GM12878 (cell line): ENCODE measurements at regions of chr3 and their contacts with region 1.

Region 1: DNA sequence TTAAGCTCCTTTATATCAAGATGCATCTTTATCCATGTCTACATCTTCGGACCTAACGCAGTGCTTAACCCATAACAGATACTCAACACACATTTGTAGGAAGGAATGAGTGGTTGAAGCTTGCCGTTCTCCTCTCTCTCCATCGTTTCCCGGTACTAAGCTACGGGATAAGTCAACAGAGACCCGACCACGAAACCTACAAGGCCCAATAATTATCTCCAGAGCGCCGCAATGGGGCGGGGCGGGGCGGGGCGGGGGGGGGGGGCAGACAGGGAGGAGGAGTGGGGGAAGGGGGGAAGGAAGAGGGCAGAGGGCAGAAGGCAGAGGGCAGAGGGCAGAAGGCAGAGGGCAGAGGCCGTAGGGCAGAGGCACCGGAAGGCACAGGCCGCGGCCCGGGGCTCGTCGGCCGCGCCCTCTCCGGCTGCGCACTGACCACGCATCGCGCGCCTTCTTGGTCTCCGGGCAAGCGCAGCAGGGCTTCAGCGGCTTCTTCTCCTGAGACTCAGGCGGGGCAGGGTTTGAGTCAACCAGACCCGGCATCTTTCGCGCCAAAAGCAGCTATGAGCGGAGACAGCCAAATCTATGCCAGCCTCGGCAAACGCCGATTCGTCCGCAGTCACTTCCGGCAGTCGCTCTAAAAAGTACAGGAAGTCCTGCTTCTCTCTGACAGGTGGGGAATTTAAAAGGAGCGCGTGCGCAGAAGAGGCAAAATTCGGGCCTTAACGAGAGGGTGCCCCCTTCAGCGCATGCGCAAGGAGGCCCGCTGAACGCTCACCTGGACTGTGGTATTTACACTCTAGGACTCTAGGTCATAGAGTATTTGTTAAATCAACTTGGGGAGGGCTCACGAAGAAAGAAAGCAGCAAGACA is at the start of gene COX17:
- DNase-seq: peak; percentile 99
- ATAC-seq: peak; percentile 88
- H3K4me3 ChIP-seq: peak within 1 kb of the TSS; percentile 90
- H3K27ac ChIP-seq: peak within 1 kb of the TSS; percentile 95
- H3K4me1 ChIP-seq: peaks cover 6% of the 10 kb centered on the region
- H3K27me3 ChIP-seq: no peaks in the 10 kb centered on the region
- CTCF ChIP-seq: no peak
- EP300 ChIP-seq: 0 out of 4 replicates have a peak, but pooled peaks have one; percentile 3 to 28
- POLR2A ChIP-seq: peak; percentile 87
- RAD21 ChIP-seq: no peak
- polyA plus RNA-seq, gene COX17: 615 to 717 TPM

Region 2: GRCh38 chr3:118055381-118055780 is 1621.6 kb before region 1 on chr3:
- CTCF ChIA-PET with region 1: no interaction called
- POLR2A ChIA-PET with region 1: no interaction called
- RAD21 ChIA-PET with region 1: no interaction called
- SMC1A ChIA-PET with region 1: no interaction called
- in situ Hi-C with region 1: no loop called
- intact Hi-C with region 1: no loop called
- DNase-seq: no peak
- ATAC-seq: no peak
- H3K4me3 ChIP-seq: no peak overlapping the region
- H3K27ac ChIP-seq: no peak overlapping the region
- H3K4me1 ChIP-seq: no peaks in the 10 kb centered on the region
- H3K27me3 ChIP-seq: no peaks in the 10 kb centered on the region
- CTCF ChIP-seq: no peak
- EP300 ChIP-seq: no peak
- POLR2A ChIP-seq: no peak
- RAD21 ChIP-seq: no peak

Region 3: GRCh38 chr3:118884748-118885206 is 792.2 kb before region 1 on chr3:
- CTCF ChIA-PET with region 1: interaction called, 92 read pairs
- POLR2A ChIA-PET with region 1: no interaction called
- RAD21 ChIA-PET with region 1: interaction called, 42 read pairs
- SMC1A ChIA-PET with region 1: interaction called, 68 read pairs
- in situ Hi-C with region 1: no loop called
- intact Hi-C with region 1: loop called (anchors 1 kb)
- DNase-seq: no peak
- ATAC-seq: peak; percentile 92
- H3K4me3 ChIP-seq: no peak overlapping the region
- H3K27ac ChIP-seq: no peak overlapping the region
- H3K4me1 ChIP-seq: no peaks in the 10 kb centered on the region
- H3K27me3 ChIP-seq: no peaks in the 10 kb centered on the region
- CTCF ChIP-seq: peak; percentile 74 to 91 (median 88)
- EP300 ChIP-seq: no peak
- POLR2A ChIP-seq: no peak
- RAD21 ChIP-seq: peak; percentile 57

Region 4: GRCh38 chr3:119279101-119279554 is 397.9 kb before region 1 on chr3:
- CTCF ChIA-PET with region 1: interaction called, 60 read pairs
- POLR2A ChIA-PET with region 1: no interaction called
- RAD21 ChIA-PET with region 1: interaction called, 16 read pairs
- SMC1A ChIA-PET with region 1: interaction called, 35 read pairs
- in situ Hi-C with region 1: loop called (anchors 25 kb)
- intact Hi-C with region 1: loop called (anchors 1 kb)
- DNase-seq: no peak
- ATAC-seq: no peak; the same call in 2 of the 3 replicates
- H3K4me3 ChIP-seq: no peak overlapping the region
- H3K27ac ChIP-seq: no peak overlapping the region
- H3K4me1 ChIP-seq: no peaks in the 10 kb centered on the region; the same call in 1 of the 2 replicates
- H3K27me3 ChIP-seq: no peaks in the 10 kb centered on the region
- CTCF ChIP-seq: no peak
- EP300 ChIP-seq: no peak
- POLR2A ChIP-seq: no peak
- RAD21 ChIP-seq: no peak

Region 5: DNA sequence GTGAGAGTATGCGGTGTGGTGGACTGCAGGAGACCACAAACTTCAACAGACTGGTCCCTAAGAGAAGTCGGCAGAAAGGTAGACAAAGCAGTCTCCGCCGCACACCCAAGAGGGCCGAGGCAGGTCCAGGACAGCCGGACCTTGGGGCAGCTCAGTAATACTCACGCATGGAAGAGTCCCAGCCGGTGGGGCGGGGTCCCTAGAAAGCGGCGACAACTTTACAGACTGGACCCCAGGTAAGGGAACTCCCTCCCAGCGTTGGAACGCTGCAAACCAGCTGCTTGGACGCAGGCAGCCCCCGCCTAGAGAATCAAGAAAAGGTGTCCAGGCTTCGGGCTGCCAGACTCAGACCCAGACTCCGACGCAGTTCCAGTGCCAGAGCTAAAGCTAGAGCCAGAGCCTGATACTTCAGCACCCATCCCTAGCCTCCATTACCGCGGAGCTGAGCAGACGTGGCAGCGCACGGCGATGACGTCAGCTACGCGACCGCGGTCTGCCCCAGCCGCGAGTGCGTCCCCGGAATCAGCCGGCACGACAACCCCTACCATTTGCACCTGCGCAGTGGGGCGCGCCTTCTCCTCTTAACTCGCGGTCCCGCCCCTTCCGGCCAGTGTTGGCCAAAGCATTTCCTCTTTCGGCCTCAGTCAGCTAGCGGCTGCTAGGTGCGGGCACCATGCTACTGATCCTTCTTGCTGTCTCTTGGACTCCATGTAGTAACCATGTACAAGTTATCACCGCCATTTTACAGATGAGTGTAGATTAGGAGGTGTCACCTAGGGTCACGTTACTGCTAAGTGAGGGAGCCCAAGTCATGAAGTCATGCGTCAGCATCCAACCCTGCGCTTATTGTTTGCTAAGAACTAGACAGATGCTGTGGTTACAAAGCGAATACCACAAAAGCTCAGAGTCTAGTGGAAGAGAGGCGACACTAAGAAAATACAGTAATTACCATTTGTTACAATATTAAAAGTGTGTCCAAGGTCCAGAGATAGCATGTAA is 213.5 kb before region 1 on chr3 and contains the start of gene TMEM39A:
- CTCF ChIA-PET with region 1: interaction called, 18 read pairs
- POLR2A ChIA-PET with region 1: interaction called, 6 read pairs
- RAD21 ChIA-PET with region 1: interaction called, 22 read pairs
- SMC1A ChIA-PET with region 1: interaction called, 39 read pairs
- in situ Hi-C with region 1: no loop called
- intact Hi-C with region 1: loop called (anchors 1 kb)
- DNase-seq: peak; percentile 96
- ATAC-seq: peak; percentile 93
- H3K4me3 ChIP-seq: peak within 1 kb of the TSS; percentile 97
- H3K27ac ChIP-seq: peak within 1 kb of the TSS; percentile 90
- H3K4me1 ChIP-seq: peaks cover 9% of the 10 kb centered on the region
- H3K27me3 ChIP-seq: no peaks in the 10 kb centered on the region
- CTCF ChIP-seq: no peak
- EP300 ChIP-seq: peak; percentile 10 to 83; a peak in 2 of 4 replicates
- POLR2A ChIP-seq: peak; percentile 96
- RAD21 ChIP-seq: no peak
- polyA plus RNA-seq, gene TMEM39A: 10.8 to 21.2 TPM

Region 6: DNA sequence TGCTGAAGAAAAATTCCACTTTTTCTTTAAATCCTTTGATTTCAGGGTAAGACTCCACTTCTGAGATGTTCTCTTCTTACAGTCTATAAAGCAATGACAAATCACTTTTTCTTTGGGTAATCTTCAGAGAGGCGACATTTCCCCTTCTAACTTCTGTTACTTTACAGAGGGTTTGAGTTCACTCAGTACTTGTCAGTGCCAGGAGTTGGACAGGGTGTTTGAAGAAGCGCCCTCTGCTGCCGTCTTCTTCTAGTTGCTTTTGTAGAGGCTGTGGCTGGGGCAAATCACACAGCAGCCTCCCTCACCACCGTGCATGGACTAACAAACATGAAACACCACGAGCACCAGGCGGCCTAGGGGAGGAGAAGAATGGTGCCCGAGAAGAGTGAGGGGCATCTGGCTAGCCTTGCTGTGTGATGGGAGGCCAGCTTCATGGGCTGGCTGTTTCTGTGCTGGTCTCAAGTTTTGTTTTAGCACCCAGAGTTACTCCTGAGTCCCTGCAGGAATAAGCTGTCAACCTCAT is 117.5 kb before region 1 on chr3 and contains the start of gene CD80:
- CTCF ChIA-PET with region 1: interaction called, 43 read pairs
- POLR2A ChIA-PET with region 1: interaction called, 10 read pairs
- RAD21 ChIA-PET with region 1: interaction called, 14 read pairs
- SMC1A ChIA-PET with region 1: interaction called, 47 read pairs
- in situ Hi-C with region 1: no loop called
- intact Hi-C with region 1: loop called (anchors 2 kb)
- DNase-seq: peak; percentile 82
- ATAC-seq: peak; percentile 72
- H3K4me3 ChIP-seq: peak within 1 kb of the TSS; percentile 76
- H3K27ac ChIP-seq: peak within 1 kb of the TSS; percentile 98
- H3K4me1 ChIP-seq: peaks cover 22% of the 10 kb centered on the region
- H3K27me3 ChIP-seq: no peaks in the 10 kb centered on the region
- CTCF ChIP-seq: peak; percentile 66 to 81 (median 68)
- EP300 ChIP-seq: peak in 1 of 2 experiments; percentile 22; a peak in 1 of 4 replicates
- POLR2A ChIP-seq: peak; percentile 67; the same call in 1 of the 2 replicates
- RAD21 ChIP-seq: peak; percentile 67
- polyA plus RNA-seq, gene CD80: 42.5 to 54.1 TPM

Region 7: GRCh38 chr3:119637679-119638525 is 39.1 kb before region 1 on chr3:
- CTCF ChIA-PET with region 1: interaction called, 14 read pairs
- POLR2A ChIA-PET with region 1: interaction called, 5 read pairs
- RAD21 ChIA-PET with region 1: interaction called, 18 read pairs
- SMC1A ChIA-PET with region 1: interaction called, 14 read pairs
- in situ Hi-C with region 1: no loop called
- intact Hi-C with region 1: loop called (anchors 1 kb)
- DNase-seq: peak; percentile 82
- ATAC-seq: peak; percentile 62
- H3K4me3 ChIP-seq: peak overlapping the region; percentile 21; the same call in 1 of the 2 replicates
- H3K27ac ChIP-seq: peak overlapping the region; percentile 96
- H3K4me1 ChIP-seq: peaks cover 37% of the 10 kb centered on the region
- H3K27me3 ChIP-seq: no peaks in the 10 kb centered on the region
- CTCF ChIP-seq: no peak
- EP300 ChIP-seq: peak; percentile 16 to 29; a peak in 1 of 4 replicates
- POLR2A ChIP-seq: no peak
- RAD21 ChIP-seq: no peak

Region 8: GRCh38 chr3:119695480-119695879 is 18.5 kb after region 1 on chr3:
- CTCF ChIA-PET with region 1: interaction called, 167 read pairs
- POLR2A ChIA-PET with region 1: interaction called, 5 read pairs
- RAD21 ChIA-PET with region 1: interaction called, 18 read pairs
- SMC1A ChIA-PET with region 1: interaction called, 106 read pairs
- in situ Hi-C with region 1: no loop called
- intact Hi-C with region 1: no loop called
- DNase-seq: no peak
- ATAC-seq: no peak
- H3K4me3 ChIP-seq: no peak overlapping the region
- H3K27ac ChIP-seq: no peak overlapping the region
- H3K4me1 ChIP-seq: peaks cover 20% of the 10 kb centered on the region
- H3K27me3 ChIP-seq: no peaks in the 10 kb centered on the region
- CTCF ChIP-seq: no peak
- EP300 ChIP-seq: no peak
- POLR2A ChIP-seq: no peak
- RAD21 ChIP-seq: no peak

Region 9: DNA sequence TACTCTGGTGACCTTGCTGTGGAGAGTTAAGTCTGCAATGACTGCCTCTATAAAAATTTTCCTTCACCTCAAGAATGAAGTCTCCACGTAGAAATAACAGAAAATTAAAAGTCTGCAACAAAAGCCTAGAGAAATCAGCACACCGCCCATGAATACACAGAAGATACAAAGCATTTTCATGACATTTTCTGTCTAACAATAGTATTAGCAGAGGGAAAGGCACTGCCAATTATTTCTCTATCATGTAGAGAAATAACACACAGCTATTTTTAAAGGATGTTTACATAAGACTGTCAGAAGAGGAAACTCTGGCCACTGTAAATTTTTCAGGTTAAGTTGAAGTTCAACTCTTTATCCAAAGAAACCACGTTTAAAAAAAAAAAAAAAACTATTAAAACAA is 336.5 kb after region 1 on chr3:
- CTCF ChIA-PET with region 1: no interaction called
- POLR2A ChIA-PET with region 1: no interaction called
- RAD21 ChIA-PET with region 1: no interaction called
- SMC1A ChIA-PET with region 1: no interaction called
- in situ Hi-C with region 1: no loop called
- intact Hi-C with region 1: no loop called
- DNase-seq: no peak
- ATAC-seq: no peak
- H3K4me3 ChIP-seq: no peak overlapping the region
- H3K27ac ChIP-seq: no peak overlapping the region
- H3K4me1 ChIP-seq: peaks cover 6% of the 10 kb centered on the region
- H3K27me3 ChIP-seq: no peaks in the 10 kb centered on the region
- CTCF ChIP-seq: no peak
- EP300 ChIP-seq: no peak
- POLR2A ChIP-seq: no peak
- RAD21 ChIP-seq: no peak